ENCODE measurements at regions of chr17 and their contacts with region 1.

Region 1: DNA sequence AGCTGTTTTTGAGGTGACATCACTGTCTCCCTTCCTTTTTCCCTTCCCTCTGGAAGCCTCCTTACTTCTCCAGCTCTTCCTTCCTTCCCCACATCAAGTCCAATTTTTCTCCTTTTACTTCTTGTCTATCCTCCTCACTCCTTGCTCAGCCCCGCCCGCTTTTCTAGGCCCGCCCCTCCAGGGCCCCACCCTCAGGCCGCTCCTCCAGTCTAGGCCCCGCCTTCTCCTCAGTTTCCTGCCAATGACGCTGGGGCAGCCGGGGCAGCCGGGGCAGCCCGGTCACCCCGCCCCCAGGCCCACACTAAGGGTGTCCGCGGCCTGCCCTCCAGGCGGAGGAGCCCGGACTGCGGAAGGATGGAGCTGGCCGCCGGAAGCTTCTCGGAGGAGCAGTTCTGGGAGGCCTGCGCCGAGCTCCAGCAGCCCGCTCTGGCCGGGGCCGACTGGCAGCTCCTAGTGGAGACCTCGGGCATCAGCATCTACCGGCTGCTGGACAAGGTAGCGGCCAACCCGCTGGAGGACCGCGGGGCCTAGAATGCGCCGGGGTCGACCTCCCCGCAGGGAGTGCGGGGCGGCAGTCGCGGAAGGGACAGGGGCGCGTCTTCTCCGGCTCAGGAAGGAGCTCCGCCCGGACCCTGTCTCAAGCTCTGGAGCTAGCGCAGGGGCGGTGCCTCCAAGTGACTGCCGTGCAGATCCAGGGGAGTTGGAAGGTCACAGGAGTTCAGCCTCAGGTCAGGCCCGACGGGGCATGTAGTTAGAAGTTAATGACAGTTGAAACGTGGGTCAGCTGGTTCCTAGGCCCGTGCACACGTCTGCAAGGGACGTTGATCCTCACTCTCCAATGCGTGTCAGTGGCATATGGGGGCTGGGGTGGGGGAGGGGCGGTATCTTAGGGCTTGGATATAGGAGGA is at the start of gene PCTP:
- DNase-seq: peak; percentile 88
- H3K4me3 ChIP-seq: peak within 1 kb of the TSS; percentile 55 to 75 (median 69)
- H3K27ac ChIP-seq: peak within 1 kb of the TSS; percentile 47
- H3K4me1 ChIP-seq: peaks cover 5% of the 10 kb centered on the region
- H3K27me3 ChIP-seq: no peaks in the 10 kb centered on the region
- CTCF ChIP-seq: peak; percentile 37 to 72
- POLR2A ChIP-seq: peak; percentile 36
- total RNA-seq, gene PCTP: 13.5 and 14.5 TPM in 2 replicates

Region 2: GRCh38 chr17:55421179-55421934 is 329.6 kb before region 1 on chr17 and contains the start of gene MMD:
- CTCF ChIA-PET with region 1: no interaction called
- POLR2A ChIA-PET with region 1: no interaction called
- dilution Hi-C with region 1: no loop called
- intact Hi-C with region 1: loop called (anchors 5 kb)
- DNase-seq: no peak
- H3K4me3 ChIP-seq: peak within 1 kb of the TSS; percentile 89 to 97 (median 92)
- H3K27ac ChIP-seq: peak within 1 kb of the TSS; percentile 61
- H3K4me1 ChIP-seq: peaks cover 13% of the 10 kb centered on the region
- H3K27me3 ChIP-seq: peaks cover 8 to 28% of the 10 kb centered on the region in 2 experiments
- CTCF ChIP-seq: no peak
- POLR2A ChIP-seq: no peak
- total RNA-seq, gene MMD: 9.3 TPM in 2 replicates

Region 3: DNA sequence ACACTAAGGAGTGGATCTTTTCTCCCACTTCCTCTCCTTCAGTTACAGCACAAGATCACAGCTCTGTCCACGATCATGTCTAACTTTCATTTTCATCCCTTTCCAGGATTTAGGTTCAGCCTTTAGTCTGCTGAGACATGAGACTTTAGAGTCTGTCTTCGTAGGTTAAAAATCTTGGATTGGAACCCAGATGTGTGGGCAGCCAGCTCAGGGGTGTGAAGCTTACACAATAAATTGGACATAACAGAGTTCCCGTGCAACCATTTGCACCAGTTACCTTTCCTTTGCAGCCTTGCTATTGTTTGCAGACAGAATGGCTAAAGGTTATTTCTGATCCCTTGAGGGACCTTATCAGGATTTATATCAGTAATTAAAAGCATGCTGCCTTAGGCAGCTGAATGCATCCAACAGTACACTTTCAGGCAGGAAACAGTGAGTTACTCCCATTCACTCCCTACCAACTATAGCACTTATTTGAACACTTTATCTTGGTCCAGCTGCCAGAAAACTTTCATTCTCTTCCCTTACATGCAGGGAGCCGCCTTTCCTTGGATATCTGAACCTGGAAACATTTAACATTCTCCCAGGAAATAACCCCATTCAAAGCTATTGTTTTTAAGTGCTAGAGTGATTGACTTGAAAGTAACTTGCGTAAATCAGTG is 115.6 kb before region 1 on chr17:
- CTCF ChIA-PET with region 1: no interaction called
- POLR2A ChIA-PET with region 1: no interaction called
- dilution Hi-C with region 1: no loop called
- intact Hi-C with region 1: no loop called
- DNase-seq: peak; percentile 42
- H3K4me3 ChIP-seq: no peak overlapping the region
- H3K27ac ChIP-seq: no peak overlapping the region
- H3K4me1 ChIP-seq: no peaks in the 10 kb centered on the region
- H3K27me3 ChIP-seq: no peaks in the 10 kb centered on the region
- CTCF ChIP-seq: no peak
- POLR2A ChIP-seq: no peak

Region 4: DNA sequence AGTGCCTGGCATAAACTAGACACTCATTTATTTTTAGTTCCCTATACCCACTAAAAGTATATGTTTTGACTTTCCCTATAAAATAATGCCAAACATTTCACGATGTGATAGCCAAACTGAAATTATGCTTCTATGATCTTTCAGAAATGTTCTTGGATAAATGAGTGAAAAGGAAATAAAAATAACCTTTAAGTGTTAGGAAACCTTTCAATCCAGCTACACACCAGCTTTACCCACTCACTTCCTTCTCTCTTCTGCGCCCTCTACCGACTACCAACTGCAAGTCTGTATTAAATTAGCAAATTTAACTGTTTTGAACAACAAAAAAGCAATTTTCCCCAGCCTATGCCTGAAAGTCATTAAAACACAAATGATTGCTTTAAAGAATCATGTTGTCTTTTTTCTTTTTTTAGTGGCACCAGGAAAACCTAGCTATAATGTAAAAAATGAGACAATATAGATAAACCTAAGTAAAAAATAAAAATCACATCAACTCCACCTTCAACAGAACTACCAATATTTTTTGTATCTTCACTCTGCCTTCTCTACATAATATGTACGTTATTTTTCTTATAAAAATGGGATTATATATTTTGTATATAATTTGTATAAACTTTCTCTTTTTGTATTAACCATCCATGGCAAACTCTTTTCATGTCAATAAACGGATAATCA is 15.1 kb before region 1 on chr17:
- CTCF ChIA-PET with region 1: interaction called, 14 read pairs
- POLR2A ChIA-PET with region 1: no interaction called
- dilution Hi-C with region 1: no loop called
- intact Hi-C with region 1: loop called (anchors 2 kb)
- DNase-seq: peak; percentile 32
- H3K4me3 ChIP-seq: no peak overlapping the region
- H3K27ac ChIP-seq: no peak overlapping the region
- H3K4me1 ChIP-seq: no peaks in the 10 kb centered on the region
- H3K27me3 ChIP-seq: no peaks in the 10 kb centered on the region
- CTCF ChIP-seq: peak; percentile 44 to 54
- POLR2A ChIP-seq: no peak

Region 5: GRCh38 chr17:55763851-55764250 is 12.8 kb after region 1 on chr17:
- CTCF ChIA-PET with region 1: interaction called, 13 read pairs
- POLR2A ChIA-PET with region 1: interaction called, 4 read pairs
- dilution Hi-C with region 1: no loop called
- intact Hi-C with region 1: loop called (anchors 1 kb)
- DNase-seq: peak; percentile 71
- H3K4me3 ChIP-seq: no peak overlapping the region
- H3K27ac ChIP-seq: peak overlapping the region; percentile 59
- H3K4me1 ChIP-seq: peaks cover 22% of the 10 kb centered on the region
- H3K27me3 ChIP-seq: no peaks in the 10 kb centered on the region
- CTCF ChIP-seq: no peak
- POLR2A ChIP-seq: no peak

Region 6: DNA sequence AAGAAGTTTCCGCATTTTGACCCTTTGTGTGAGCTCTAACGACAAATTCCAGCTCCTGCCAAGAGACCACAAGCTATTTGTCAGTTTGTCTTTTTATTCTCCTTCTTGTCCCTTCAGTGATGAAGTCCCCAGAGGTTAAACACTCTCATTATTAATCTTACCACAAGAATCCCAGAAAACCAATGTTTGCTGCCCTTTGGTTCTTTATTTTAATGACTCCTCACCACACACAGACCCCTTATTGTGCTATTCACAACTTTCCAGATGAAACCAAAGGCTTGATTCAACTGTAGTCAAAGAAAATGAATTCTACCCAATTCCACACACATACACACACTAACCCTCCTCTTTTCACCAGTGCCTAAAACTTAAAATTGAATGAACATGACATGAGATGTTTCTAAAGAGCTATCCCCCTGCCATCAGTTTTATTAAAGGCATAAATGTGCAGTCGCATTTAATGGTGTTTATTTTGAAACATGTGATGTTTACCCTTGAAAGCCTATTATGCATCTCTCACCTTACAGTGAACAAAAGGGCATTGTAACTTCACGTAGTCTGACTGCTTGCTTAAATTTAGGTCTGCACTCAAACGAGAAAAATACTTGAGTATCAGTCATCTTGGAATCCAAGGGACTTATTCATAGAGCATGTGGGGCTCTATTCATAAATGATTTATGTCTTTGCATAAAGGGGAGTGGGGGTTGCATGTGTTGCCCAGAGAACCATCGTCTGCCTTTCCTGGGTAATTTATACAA is 43.9 kb after region 1 on chr17:
- CTCF ChIA-PET with region 1: no interaction called
- POLR2A ChIA-PET with region 1: no interaction called
- dilution Hi-C with region 1: no loop called
- intact Hi-C with region 1: no loop called
- DNase-seq: no peak
- H3K4me3 ChIP-seq: no peak overlapping the region
- H3K27ac ChIP-seq: no peak overlapping the region
- H3K4me1 ChIP-seq: no peaks in the 10 kb centered on the region
- H3K27me3 ChIP-seq: peaks cover 0 to 4% of the 10 kb centered on the region in 2 experiments
- CTCF ChIP-seq: no peak
- POLR2A ChIP-seq: no peak

Region 7: DNA sequence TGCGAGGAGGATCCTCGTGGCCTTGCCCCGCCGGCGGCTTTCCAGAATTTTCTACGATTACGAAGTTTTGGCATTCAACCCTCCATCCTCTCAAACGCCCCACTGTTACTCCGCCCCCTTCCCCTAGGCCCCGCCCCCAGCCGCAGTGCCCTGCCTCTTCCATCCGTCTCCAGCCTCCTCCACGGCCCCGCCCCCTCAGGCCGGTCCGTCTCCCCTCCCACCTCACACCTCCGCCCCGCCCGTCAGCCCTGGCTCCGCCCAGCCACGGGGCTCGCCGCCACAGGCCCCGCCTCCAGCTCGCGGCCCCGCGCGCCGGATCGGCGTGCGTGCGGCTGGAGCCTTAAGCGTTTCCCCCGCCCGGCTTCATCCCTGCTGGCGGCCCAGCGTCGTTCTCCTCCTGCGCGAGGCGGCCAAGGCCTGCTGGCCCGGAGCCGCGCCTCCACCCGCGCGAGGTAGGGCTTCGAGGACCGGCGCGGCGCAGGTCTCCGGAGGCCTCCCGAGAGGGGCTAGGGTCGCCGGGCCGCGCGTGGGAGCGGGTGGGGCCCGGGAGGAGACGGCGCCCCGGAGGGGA is 1082.9 kb after region 1 on chr17 and contains the starts of genes C17orf67 and DGKE:
- CTCF ChIA-PET with region 1: no interaction called
- POLR2A ChIA-PET with region 1: no interaction called
- dilution Hi-C with region 1: no loop called
- intact Hi-C with region 1: loop called (anchors 5 kb)
- DNase-seq: peak; percentile 97
- H3K4me3 ChIP-seq: peak within 1 kb of the TSS; percentile 76 to 77 (median 77)
- H3K27ac ChIP-seq: peak within 1 kb of the TSS; percentile 83
- H3K4me1 ChIP-seq: peaks cover 45% of the 10 kb centered on the region
- H3K27me3 ChIP-seq: no peaks in the 10 kb centered on the region
- CTCF ChIP-seq: no peak
- POLR2A ChIP-seq: peak; percentile 56
- total RNA-seq, gene C17orf67: 5.6 and 5.8 TPM in 2 replicates
- total RNA-seq, gene DGKE: 20.3 and 22.9 TPM in 2 replicates